A673 (cell line): ENCODE measurements at regions of chr13 and their contacts with region 1.

Region 1: GRCh38 chr13:39616087-39616694 is 13.2 kb upstream of the LHFPL6 start:
- DNase-seq: peak; percentile 89
- H3K4me3 ChIP-seq: no peak overlapping the region
- H3K27ac ChIP-seq: no peak overlapping the region
- H3K4me1 ChIP-seq: peaks cover 31% of the 10 kb centered on the region
- H3K27me3 ChIP-seq: no peaks in the 10 kb centered on the region
- CTCF ChIP-seq: peak; percentile 91

Region 2: GRCh38 chr13:39273953-39274738 is 342.0 kb before region 1 on chr13:
- CTCF ChIA-PET with region 1: interaction called, 3 read pairs
- POLR2A ChIA-PET with region 1: no interaction called
- intact Hi-C with region 1: loop called (anchors 5 kb)
- DNase-seq: peak; percentile 23
- H3K4me3 ChIP-seq: no peak overlapping the region
- H3K27ac ChIP-seq: no peak overlapping the region
- H3K4me1 ChIP-seq: peaks cover 42% of the 10 kb centered on the region
- H3K27me3 ChIP-seq: no peaks in the 10 kb centered on the region
- CTCF ChIP-seq: peak; percentile 19; the same call in 1 of the 2 replicates

Region 3: DNA sequence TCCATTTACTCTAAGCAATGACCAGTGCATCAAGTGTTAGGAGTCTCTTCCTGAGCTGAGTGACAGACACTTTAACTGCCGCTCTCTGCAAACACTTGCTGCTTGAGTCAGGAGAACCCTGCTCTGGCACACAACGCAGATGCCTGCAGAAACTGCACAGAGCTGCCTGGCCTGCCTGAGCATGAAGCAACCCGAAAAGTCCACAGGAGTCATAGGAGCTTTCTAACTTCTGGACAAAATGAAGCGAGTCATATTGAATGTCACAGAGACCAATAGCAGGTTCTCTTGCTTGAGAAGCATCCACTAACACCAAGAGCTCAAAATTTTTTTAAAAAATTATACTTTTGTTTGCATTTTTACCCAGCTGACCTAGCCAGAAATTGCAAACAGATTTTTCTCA is 245.6 kb before region 1 on chr13:
- CTCF ChIA-PET with region 1: interaction called, 10 read pairs
- POLR2A ChIA-PET with region 1: no interaction called
- intact Hi-C with region 1: no loop called
- DNase-seq: peak; percentile 91
- H3K4me3 ChIP-seq: no peak overlapping the region
- H3K27ac ChIP-seq: peak overlapping the region; percentile 92
- H3K4me1 ChIP-seq: peaks cover 89% of the 10 kb centered on the region
- H3K27me3 ChIP-seq: no peaks in the 10 kb centered on the region
- CTCF ChIP-seq: no peak

Region 4: GRCh38 chr13:39910833-39911232 is 294.6 kb after region 1 on chr13:
- CTCF ChIA-PET with region 1: no interaction called
- POLR2A ChIA-PET with region 1: no interaction called
- intact Hi-C with region 1: no loop called
- DNase-seq: no peak
- H3K4me3 ChIP-seq: no peak overlapping the region
- H3K27ac ChIP-seq: no peak overlapping the region
- H3K4me1 ChIP-seq: no peaks in the 10 kb centered on the region
- H3K27me3 ChIP-seq: no peaks in the 10 kb centered on the region
- CTCF ChIP-seq: no peak